ENCODE measurements at regions of chr12 and their contacts with region 1.

Region 1: GRCh38 chr12:45268672-45269411 is 52.9 kb downstream of the ANO6 start:
- DNase-seq: peak; percentile 73 to 91
- ATAC-seq: peak; percentile 70 to 88 (median 82)
- H3K4me3 ChIP-seq: peak overlapping the region in 3 of 10 donors; percentile 6 to 18 (median 15)
- H3K27ac ChIP-seq: peak overlapping the region in 8 of 10 donors; percentile 19 to 69 (median 40)
- H3K4me1 ChIP-seq: peaks cover 9 to 87% (median 48%) of the 10 kb centered on the region in 9 donors
- H3K27me3 ChIP-seq: no peaks in the 10 kb centered on the region
- CTCF ChIP-seq: peak in 8 of 9 donors; percentile 30 to 70 (median 52)

Region 2: DNA sequence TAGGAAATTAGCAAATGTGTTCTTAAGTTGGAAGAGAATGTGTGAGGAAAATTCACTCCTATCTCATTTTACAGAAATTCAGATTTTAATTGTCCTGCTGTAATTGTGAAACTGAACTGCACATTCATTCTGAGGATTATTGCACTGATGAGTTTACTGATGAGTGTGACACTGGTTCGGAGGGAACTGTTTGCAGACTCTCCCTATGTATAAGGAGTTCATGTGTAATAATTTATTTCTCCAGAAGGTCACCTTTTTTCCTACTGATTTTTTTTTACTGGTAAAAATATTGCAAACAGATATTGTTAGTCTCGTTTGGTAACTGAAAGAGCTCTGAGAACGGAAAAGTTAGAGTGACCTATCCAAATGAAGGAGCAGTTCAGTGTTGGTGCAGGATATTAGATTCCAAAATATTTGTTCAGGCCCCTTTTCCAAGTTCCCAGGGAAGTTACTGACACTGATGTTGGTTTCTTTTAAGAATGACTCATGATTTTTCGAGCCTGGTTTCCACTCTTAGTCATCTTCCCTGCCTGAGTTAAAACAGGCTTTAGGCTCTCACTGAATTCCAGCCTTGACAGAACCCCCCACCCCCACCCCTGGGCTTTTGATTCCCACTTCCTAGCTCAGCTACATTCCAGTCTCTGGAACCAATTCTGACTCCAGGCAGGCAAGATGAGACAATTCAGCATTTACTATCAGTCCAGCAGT is 34.5 kb before region 1 on chr12:
- intact Hi-C with region 1: loop called in 3 of 10 experiments (anchors 5 kb)
- DNase-seq: peak in 1 of 2 donors; percentile 51
- ATAC-seq: peak; percentile 88 to 94 (median 91)
- H3K4me3 ChIP-seq: peak overlapping the region in 4 of 10 donors; percentile 3 to 19 (median 10)
- H3K27ac ChIP-seq: peak overlapping the region; percentile 4 to 97 (median 86)
- H3K4me1 ChIP-seq: peaks cover 16 to 56% (median 51%) of the 10 kb centered on the region in 9 donors
- H3K27me3 ChIP-seq: no peaks in the 10 kb centered on the region
- CTCF ChIP-seq: no peak

Region 3: DNA sequence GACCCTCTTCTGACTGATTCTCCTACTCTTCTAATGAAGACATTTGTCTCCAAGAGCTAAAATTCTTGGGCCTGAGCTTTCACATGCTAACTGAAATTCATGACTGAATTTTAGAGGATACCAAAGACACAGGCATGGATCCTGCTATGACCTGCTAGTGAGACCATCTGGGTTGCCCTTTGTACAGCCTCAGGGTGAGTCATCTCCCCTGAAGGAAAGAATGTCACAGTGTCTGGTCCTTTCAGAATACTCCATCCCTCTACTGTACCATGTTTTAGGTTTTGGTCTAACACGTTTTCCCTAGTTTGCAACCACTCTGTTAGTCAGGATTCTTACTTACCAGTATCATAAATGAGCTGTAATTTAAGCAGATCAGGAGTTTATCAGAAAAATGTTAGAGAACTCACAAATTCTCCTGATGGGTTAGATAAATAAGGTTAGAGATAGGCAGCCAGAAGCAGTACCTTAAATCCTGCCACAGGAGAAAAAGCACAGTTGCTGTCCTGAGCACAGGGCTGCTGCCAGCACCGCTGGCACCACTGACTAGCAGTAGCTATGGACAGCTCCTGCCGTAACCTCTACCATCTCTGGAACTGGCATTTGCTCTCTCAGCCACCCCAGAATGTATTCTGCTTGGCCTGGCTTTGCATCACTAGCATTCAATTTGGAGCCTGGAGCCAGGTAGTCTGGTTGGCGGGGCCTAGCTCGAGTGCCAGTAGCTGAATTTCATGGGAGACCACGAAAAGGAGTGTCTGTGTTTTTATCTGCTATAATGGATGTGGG is 74.6 kb after region 1 on chr12:
- intact Hi-C with region 1: loop called in 1 of 10 experiments (anchors 10 kb)
- DNase-seq: peak; percentile 15 to 35
- ATAC-seq: peak in 7 of 8 donors; percentile 61 to 91 (median 83)
- H3K4me3 ChIP-seq: no peak overlapping the region
- H3K27ac ChIP-seq: peak overlapping the region in 4 of 10 donors; percentile 5 to 17 (median 12)
- H3K4me1 ChIP-seq: peaks cover 3 to 35% (median 18%) of the 10 kb centered on the region in 9 donors
- H3K27me3 ChIP-seq: no peaks in the 10 kb centered on the region
- CTCF ChIP-seq: no peak

Region 4: GRCh38 chr12:45388545-45388944 is 119.7 kb after region 1 on chr12:
- intact Hi-C with region 1: loop called in 3 of 10 experiments (anchors 5 to 10 kb)
- DNase-seq: peak in 1 of 2 donors; percentile 49
- ATAC-seq: peak in 6 of 8 donors; percentile 47 to 77 (median 58)
- H3K4me3 ChIP-seq: no peak overlapping the region
- H3K27ac ChIP-seq: no peak overlapping the region
- H3K4me1 ChIP-seq: peaks cover 0 to 5% (median 0%) of the 10 kb centered on the region in 9 donors
- H3K27me3 ChIP-seq: no peaks in the 10 kb centered on the region
- CTCF ChIP-seq: peak; percentile 11 to 79 (median 61)